Heart right ventricle (tissue), 16 donors: ENCODE measurements at regions of chr17 and their contacts with region 1.

Region 1: DNA sequence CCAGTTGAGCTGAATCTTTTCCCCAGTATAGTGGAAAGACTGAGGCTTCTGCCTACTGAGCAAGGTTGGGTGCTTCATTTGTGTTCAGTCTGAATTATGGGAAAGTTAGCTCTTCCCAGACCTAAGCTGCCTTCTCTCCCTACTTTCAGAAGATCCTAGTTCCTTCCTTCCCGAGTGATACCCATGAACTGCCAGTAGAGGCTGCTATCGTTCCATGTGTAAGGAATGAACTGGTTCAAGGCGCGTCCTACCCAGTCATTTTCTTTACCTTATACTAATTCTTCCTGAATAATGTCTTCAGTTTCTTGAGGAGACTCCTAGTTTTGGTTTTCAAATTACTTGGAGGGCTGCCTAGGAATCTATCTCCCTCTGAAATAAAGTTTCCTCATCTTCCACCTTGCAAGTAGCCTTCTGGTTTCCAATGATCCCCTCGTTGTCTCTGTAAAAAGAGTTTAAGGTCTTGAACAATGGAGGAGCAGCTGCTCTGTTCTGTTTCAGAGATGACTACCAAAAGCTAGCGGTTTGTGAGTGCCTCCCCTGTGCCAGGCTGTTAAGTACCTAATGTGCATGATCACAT is 934 bp upstream of the AOC2 start:
- DNase-seq: peak in 1 of 2 donors; percentile 58
- ATAC-seq: peak; percentile 56 to 87 (median 78)
- H3K4me3 ChIP-seq: no peak overlapping the region
- H3K27ac ChIP-seq: peak overlapping the region in 1 of 10 donors; percentile 12
- H3K4me1 ChIP-seq: peaks cover 0 to 22% (median 0%) of the 10 kb centered on the region in 9 donors
- H3K27me3 ChIP-seq: no peaks in the 10 kb centered on the region
- CTCF ChIP-seq: peak in 8 of 9 donors; percentile 71 to 96 (median 92)

Region 2: DNA sequence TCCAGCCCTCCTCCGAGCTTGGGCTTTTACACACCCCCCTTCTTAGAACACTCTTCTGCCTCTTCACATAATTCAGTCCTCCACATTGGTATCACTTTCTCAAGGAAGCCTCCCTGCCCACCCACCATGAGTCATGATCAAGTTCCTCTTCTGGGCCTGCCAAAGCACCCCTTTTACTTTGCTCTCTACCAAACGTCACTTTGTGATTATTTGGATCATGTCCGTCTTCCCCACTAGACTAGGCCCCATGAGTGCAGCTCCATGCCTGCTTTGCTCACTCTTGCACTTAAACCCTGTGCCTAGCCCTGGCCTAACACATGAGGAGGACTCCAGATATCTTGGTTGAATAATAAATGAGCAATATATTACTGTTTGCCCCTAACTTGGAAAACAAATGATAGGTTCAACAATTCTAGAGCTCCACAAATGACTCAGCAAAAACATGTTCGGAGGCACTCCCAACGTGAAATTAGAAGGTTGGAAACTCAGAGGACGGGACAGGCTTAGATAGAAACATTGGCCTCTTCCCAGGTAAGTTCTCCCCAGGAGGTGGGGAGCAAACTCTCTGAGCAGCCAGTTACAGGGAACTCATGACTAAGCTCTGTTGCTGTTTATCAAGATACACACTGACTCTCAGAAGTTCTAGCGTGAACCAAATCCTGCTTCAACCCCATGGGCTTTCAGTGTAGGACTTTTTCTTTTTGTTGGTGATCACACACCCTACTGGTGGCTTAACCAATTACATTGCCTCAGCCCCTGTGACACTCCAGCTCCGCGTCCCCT is 85.5 kb after region 1 on chr17:
- intact Hi-C with region 1: loop called in 8 of 10 experiments (anchors 1 to 5 kb)
- DNase-seq: peak in 1 of 2 donors; percentile 52
- ATAC-seq: peak; percentile 77 to 97 (median 95)
- H3K4me3 ChIP-seq: no peak overlapping the region
- H3K27ac ChIP-seq: peak overlapping the region in 7 of 10 donors; percentile 17 to 78 (median 45)
- H3K4me1 ChIP-seq: peaks cover 4 to 27% (median 12%) of the 10 kb centered on the region in 9 donors
- H3K27me3 ChIP-seq: no peaks in the 10 kb centered on the region
- CTCF ChIP-seq: peak; percentile 41 to 78 (median 72)

Region 3: GRCh38 chr17:42937712-42938596 is 94.5 kb after region 1 on chr17:
- intact Hi-C with region 1: loop called in 9 of 10 experiments (anchors 1 to 5 kb)
- DNase-seq: peak in 1 of 2 donors; percentile 23
- ATAC-seq: peak; percentile 59 to 80 (median 76)
- H3K4me3 ChIP-seq: no peak overlapping the region
- H3K27ac ChIP-seq: no peak overlapping the region
- H3K4me1 ChIP-seq: peaks cover 0 to 3% (median 0%) of the 10 kb centered on the region in 9 donors
- H3K27me3 ChIP-seq: peaks cover 0 to 4% (median 0%) of the 10 kb centered on the region in 7 donors
- CTCF ChIP-seq: peak; percentile 41 to 80 (median 69)

Region 4: GRCh38 chr17:43467981-43468581 is 624.6 kb after region 1 on chr17:
- intact Hi-C with region 1: loop called in 1 of 10 experiments (anchors 5 kb)
- DNase-seq: no peak
- ATAC-seq: peak in 6 of 8 donors; percentile 18 to 65 (median 37)
- H3K4me3 ChIP-seq: no peak overlapping the region
- H3K27ac ChIP-seq: peak overlapping the region in 1 of 10 donors; percentile 21
- H3K4me1 ChIP-seq: peaks cover 0 to 18% (median 10%) of the 10 kb centered on the region in 9 donors
- H3K27me3 ChIP-seq: peaks cover 0 to 5% (median 0%) of the 10 kb centered on the region in 7 donors
- CTCF ChIP-seq: no peak

Region 5: DNA sequence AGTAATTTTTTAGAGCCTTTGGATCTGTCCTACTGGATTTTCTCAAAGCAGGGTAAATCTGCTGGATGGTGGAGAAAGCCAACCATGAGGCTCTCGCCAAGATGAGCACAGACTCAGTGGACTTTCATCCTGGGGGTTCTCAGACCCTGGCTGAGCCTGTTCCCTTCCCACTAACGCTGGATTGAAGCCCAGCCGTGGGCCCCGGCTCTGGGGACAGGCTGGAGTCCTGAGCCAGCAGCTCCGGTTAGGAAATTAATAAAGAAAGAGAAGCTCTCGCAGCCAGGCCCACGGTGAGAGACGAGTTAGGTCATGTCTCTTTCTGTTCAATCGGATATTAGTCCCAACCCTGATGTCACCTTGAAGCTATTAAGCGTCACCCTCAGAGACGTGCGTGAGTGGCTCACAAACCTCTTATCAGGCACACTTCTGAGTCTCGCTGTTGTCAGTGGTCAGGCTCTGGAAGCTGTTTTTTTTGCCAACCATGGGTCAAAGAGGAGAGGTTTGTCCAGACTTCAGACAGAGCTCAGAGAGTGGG is 791.2 kb after region 1 on chr17:
- intact Hi-C with region 1: no loop called
- DNase-seq: peak; percentile 48 to 56
- ATAC-seq: peak; percentile 49 to 88 (median 72)
- H3K4me3 ChIP-seq: no peak overlapping the region
- H3K27ac ChIP-seq: peak overlapping the region in 9 of 10 donors; percentile 43 to 97 (median 67)
- H3K4me1 ChIP-seq: peaks cover 3 to 27% (median 13%) of the 10 kb centered on the region in 9 donors
- H3K27me3 ChIP-seq: no peaks in the 10 kb centered on the region
- CTCF ChIP-seq: no peak